K562 (cell line): ENCODE measurements at regions of chr2 and their contacts with region 1.

Region 1: DNA sequence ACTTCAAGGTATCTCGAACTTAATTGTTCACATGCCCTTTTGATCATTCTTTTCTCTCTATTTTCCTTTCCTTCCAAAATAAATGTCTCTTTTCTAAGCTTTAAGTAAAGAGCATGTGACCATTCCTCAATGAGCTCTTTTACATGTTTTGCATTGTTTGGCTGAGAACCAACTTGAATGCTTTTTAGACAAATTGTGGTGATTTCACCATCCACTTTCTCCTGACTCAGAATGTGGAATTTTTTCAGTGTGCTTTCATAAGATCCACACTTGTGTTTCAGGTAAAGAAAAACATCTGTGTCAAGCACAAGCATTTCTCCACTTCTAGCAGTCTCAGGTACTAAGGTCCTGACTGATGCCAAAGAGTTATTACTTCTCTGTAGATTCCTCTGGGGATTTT is 10.7 kb downstream of the RBM43 start:
- DNase-seq: no peak
- ATAC-seq: no peak
- H3K4me3 ChIP-seq: no peak overlapping the region
- H3K27ac ChIP-seq: no peak overlapping the region
- H3K4me1 ChIP-seq: no peaks in the 10 kb centered on the region
- H3K27me3 ChIP-seq: no peaks in the 10 kb centered on the region
- CTCF ChIP-seq: no peak
- EP300 ChIP-seq: no peak
- POLR2A ChIP-seq: no peak
- RAD21 ChIP-seq: no peak

Region 2: GRCh38 chr2:151138507-151138906 is 112.5 kb before region 1 on chr2:
- CTCF ChIA-PET with region 1: no interaction called
- POLR2A ChIA-PET with region 1: no interaction called
- in situ Hi-C with region 1: no loop called
- intact Hi-C with region 1: no loop called
- DNase-seq: no peak
- ATAC-seq: no peak
- H3K4me3 ChIP-seq: no peak overlapping the region
- H3K27ac ChIP-seq: no peak overlapping the region
- H3K4me1 ChIP-seq: no peaks in the 10 kb centered on the region
- H3K27me3 ChIP-seq: no peaks in the 10 kb centered on the region
- CTCF ChIP-seq: no peak
- EP300 ChIP-seq: no peak
- POLR2A ChIP-seq: no peak
- RAD21 ChIP-seq: no peak

Region 3: GRCh38 chr2:151261231-151261976 is 10.4 kb after region 1 on chr2 and contains the start of gene RBM43:
- CTCF ChIA-PET with region 1: no interaction called
- POLR2A ChIA-PET with region 1: interaction called, 13 read pairs
- in situ Hi-C with region 1: no loop called
- intact Hi-C with region 1: no loop called
- DNase-seq: peak; percentile 90 to 93 (median 92)
- ATAC-seq: peak; percentile 93
- H3K4me3 ChIP-seq: peak within 1 kb of the TSS; percentile 66
- H3K27ac ChIP-seq: peak within 1 kb of the TSS; percentile 84
- H3K4me1 ChIP-seq: peaks cover 13 to 14% of the 10 kb centered on the region in 2 experiments
- H3K27me3 ChIP-seq: no peaks in the 10 kb centered on the region
- CTCF ChIP-seq: peak in 1 of 3 experiments; percentile 30; a peak in 1 of 6 replicates
- EP300 ChIP-seq: peak; percentile 71
- POLR2A ChIP-seq: peak; percentile 73
- RAD21 ChIP-seq: peak in 1 of 2 experiments; percentile 31; a peak in 2 of 4 replicates
- polyA plus RNA-seq, gene RBM43: 1.3 to 1.6 TPM

Region 4: DNA sequence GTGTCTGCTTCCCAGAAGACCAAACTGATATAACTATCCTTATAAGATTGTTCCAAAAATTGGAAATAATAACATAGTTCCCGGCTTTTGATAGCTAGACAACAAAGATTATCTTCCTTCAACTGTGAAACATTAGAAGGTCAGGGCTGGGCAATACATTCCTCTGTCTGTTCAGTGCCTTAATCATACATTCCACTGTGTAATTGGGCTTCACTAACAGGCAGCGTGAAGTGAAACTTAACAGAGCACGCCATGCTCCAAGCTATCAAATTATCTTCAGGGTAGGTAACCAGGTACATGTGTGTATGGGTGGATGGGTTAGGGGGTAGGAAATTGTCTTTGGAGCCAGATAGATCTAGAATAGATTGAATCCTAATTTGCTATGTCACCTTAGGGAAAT is 600.7 kb after region 1 on chr2:
- CTCF ChIA-PET with region 1: no interaction called
- POLR2A ChIA-PET with region 1: no interaction called
- in situ Hi-C with region 1: no loop called
- intact Hi-C with region 1: no loop called
- DNase-seq: no peak
- ATAC-seq: no peak
- H3K4me3 ChIP-seq: no peak overlapping the region
- H3K27ac ChIP-seq: no peak overlapping the region
- H3K4me1 ChIP-seq: peaks cover 0 to 14% of the 10 kb centered on the region in 2 experiments; a peak in 3 of 5 replicates
- H3K27me3 ChIP-seq: peaks cover 0 to 5% of the 10 kb centered on the region in 2 experiments; a peak in 2 of 5 replicates
- CTCF ChIP-seq: no peak
- EP300 ChIP-seq: no peak
- POLR2A ChIP-seq: no peak
- RAD21 ChIP-seq: no peak

Region 5: DNA sequence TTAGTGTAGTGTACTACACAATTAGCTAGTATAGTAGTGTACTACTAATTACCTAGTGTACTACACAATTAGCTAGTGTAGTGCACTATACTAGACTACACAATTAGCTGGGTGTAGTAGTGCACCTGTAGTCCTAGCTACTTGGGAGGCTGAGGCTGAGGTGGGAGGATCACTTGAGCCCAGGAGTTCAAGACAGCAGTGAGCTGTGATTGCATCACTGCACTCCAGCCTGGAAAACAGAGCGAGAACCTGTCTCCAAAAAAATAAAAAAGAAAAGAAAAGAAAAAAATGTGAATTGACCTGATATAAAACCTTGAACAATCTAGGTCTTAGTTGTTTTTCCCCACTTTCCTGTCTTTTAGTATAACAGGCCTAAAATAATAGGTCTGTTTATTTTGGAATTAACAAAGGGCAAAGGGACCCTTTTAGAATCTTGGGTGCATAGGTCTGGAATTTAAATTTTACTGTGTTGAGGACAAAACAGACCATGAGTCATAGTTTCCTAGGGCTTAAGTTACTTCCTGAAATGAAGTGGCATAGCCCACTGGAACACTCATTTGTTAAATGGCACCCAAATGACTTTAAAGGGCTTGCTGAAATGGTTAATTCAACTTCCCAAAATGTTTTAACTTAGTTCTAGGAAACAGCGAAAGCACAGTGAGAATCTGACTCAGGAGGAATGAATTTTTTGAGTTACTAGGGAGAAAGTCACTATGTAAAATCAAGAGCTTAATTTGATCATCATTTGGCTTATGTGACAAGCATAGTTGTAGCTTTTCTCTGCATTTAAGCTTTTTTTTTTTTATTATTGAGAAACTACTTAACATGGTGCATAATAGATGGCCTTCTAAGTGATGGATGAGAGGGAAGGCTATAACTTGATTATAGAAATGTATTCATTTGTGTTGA is 627.9 kb after region 1 on chr2:
- CTCF ChIA-PET with region 1: no interaction called
- POLR2A ChIA-PET with region 1: no interaction called
- in situ Hi-C with region 1: no loop called
- intact Hi-C with region 1: no loop called
- DNase-seq: peak in 1 of 4 experiments; percentile 8
- ATAC-seq: no peak
- H3K4me3 ChIP-seq: no peak overlapping the region
- H3K27ac ChIP-seq: no peak overlapping the region
- H3K4me1 ChIP-seq: no peaks in the 10 kb centered on the region; a peak in 1 of 5 replicates
- H3K27me3 ChIP-seq: peaks cover 9 to 17% of the 10 kb centered on the region in 2 experiments
- CTCF ChIP-seq: no peak
- EP300 ChIP-seq: no peak
- POLR2A ChIP-seq: no peak
- RAD21 ChIP-seq: 0 out of 4 replicates have a peak, but pooled peaks of 1 of the 2 experiments have one; percentile 16